ENCODE measurements at regions of chr14 and their contacts with region 1.

Region 1: GRCh38 chr14:56491299-56492285 is 88.0 kb upstream of the TMEM260 start:
- DNase-seq: no peak
- ATAC-seq: peak; percentile 32 to 67
- H3K4me3 ChIP-seq: no peak overlapping the region
- H3K27ac ChIP-seq: no peak overlapping the region
- H3K4me1 ChIP-seq: no peaks in the 10 kb centered on the region
- H3K27me3 ChIP-seq: no peaks in the 10 kb centered on the region

Region 2: DNA sequence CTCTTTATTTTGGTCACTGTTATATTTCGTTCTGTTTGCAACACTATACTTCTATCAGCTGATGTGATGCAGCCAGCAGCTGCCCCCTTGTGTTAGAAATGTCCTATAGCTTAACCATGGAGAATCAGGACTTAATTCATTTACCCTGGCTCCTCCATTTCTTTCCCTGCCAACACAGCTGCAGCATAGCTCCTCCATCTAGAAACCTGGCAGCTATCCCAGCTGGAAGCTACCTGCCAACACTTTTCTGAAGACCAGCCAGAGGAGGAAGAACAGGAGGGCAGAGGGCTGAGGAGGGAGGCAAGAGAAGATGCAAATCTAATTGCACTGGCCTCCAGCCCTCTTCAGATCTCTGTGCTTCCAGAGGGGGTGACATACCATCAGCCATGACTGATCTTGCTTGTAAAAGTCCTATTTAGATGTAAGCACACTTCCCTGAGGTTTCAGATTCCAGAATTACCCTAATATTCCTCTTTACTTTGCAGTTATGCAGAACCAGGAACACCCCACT is 68.8 kb before region 1 on chr14:
- intact Hi-C with region 1: no loop called
- DNase-seq: peak; percentile 33 to 67 (median 51)
- ATAC-seq: peak; percentile 90 to 92
- H3K4me3 ChIP-seq: no peak overlapping the region
- H3K27ac ChIP-seq: no peak overlapping the region
- H3K4me1 ChIP-seq: no peaks in the 10 kb centered on the region
- H3K27me3 ChIP-seq: no peaks in the 10 kb centered on the region

Region 3: GRCh38 chr14:57317316-57317715 is 825.7 kb after region 1 on chr14:
- intact Hi-C with region 1: loop called (anchors 5 to 10 kb)
- DNase-seq: peak; percentile 59 to 72 (median 63)
- ATAC-seq: peak; percentile 47 to 69
- H3K4me3 ChIP-seq: no peak overlapping the region
- H3K27ac ChIP-seq: no peak overlapping the region
- H3K4me1 ChIP-seq: no peaks in the 10 kb centered on the region
- H3K27me3 ChIP-seq: no peaks in the 10 kb centered on the region

Measured in right cardiac atrium (tissue), 5 donors.